ENCODE measurements at regions of chr22 and their contacts with region 1.

Region 1: GRCh38 chr22:35840302-35840739 is 122.6 kb downstream of the APOL5 start:
- DNase-seq: no peak
- ATAC-seq: no peak
- H3K4me3 ChIP-seq: no peak overlapping the region
- H3K27ac ChIP-seq: no peak overlapping the region
- H3K4me1 ChIP-seq: peaks cover 20% of the 10 kb centered on the region
- H3K27me3 ChIP-seq: no peaks in the 10 kb centered on the region
- CTCF ChIP-seq: no peak
- EP300 ChIP-seq: no peak
- POLR2A ChIP-seq: no peak
- RAD21 ChIP-seq: no peak

Region 2: DNA sequence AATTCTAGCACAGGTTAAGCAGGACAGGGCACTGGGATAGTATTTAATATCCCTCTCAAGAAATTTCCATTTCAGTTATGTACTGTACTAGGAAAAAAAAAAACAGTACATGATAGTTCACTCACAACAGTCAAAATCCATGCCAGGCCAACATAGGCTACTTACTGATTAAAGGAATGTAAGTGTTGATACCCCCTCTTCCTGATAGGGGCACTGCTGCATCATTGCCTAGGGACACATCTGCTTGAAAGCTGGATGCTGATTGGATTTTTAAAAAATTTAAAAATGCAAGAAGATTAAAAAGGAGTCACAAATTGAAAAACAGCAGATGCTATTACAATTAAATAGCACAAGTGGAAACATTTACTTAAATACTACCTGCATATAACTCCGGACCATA is 79.3 kb before region 1 on chr22:
- CTCF ChIA-PET with region 1: interaction called, 11 read pairs
- POLR2A ChIA-PET with region 1: no interaction called
- in situ Hi-C with region 1: no loop called
- intact Hi-C with region 1: loop called (anchors 5 kb)
- DNase-seq: peak; percentile 20
- ATAC-seq: 0 out of 3 replicates have a peak, but pooled peaks have one; percentile 36
- H3K4me3 ChIP-seq: no peak overlapping the region
- H3K27ac ChIP-seq: no peak overlapping the region
- H3K4me1 ChIP-seq: peaks cover 8% of the 10 kb centered on the region
- H3K27me3 ChIP-seq: no peaks in the 10 kb centered on the region; a peak in 1 of 5 replicates
- CTCF ChIP-seq: peak; percentile 36
- EP300 ChIP-seq: no peak
- POLR2A ChIP-seq: no peak
- RAD21 ChIP-seq: 0 out of 2 replicates have a peak, but pooled peaks have one; percentile 15